ENCODE measurements at regions of chr14 and their contacts with region 1.

Region 1: DNA sequence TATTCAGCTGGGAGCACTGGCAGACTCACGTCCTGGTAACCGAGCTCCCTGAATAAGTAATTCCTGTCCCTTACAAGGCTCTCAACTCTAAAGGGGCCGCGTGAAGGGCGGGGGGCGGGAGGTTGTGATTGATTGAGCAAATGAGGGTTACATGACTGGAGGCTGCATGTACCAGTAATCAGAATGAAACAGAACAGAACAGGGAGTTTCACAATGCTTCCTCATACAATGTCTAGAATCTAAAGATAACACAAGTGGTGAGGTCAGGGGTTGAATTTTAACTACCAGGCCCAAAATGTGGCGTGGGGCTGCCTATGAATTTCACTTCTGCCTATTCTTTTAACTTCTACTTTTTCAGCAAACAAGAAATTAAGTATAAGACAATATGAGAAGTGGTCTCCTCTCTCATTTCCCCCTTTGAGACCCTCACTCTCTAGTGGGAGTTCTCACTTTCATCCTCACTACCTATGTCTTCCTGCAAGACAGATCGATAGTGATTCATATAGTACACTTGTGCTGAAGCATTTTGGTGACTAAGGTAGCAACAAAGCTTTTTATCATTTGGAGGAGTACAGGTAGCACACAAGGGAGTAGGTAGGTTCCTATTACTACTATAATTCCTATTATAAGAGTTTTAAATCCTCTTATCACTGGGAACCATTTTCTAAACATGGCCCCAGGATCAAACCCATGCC is 239.8 kb downstream of the KTN1 start:
- DNase-seq: no peak
- H3K4me3 ChIP-seq: no peak overlapping the region
- H3K27ac ChIP-seq: no peak overlapping the region
- H3K4me1 ChIP-seq: no peaks in the 10 kb centered on the region
- H3K27me3 ChIP-seq: peaks cover 4% of the 10 kb centered on the region
- CTCF ChIP-seq: no peak

Region 2: GRCh38 chr14:55752586-55753390 is 67.0 kb before region 1 on chr14:
- CTCF ChIA-PET with region 1: no interaction called
- dilution Hi-C with region 1: no loop called
- in situ Hi-C with region 1: no loop called
- intact Hi-C with region 1: no loop called
- DNase-seq: peak; percentile 11
- H3K4me3 ChIP-seq: no peak overlapping the region
- H3K27ac ChIP-seq: no peak overlapping the region
- H3K4me1 ChIP-seq: peaks cover 7% of the 10 kb centered on the region
- H3K27me3 ChIP-seq: no peaks in the 10 kb centered on the region
- CTCF ChIP-seq: no peak

Region 3: DNA sequence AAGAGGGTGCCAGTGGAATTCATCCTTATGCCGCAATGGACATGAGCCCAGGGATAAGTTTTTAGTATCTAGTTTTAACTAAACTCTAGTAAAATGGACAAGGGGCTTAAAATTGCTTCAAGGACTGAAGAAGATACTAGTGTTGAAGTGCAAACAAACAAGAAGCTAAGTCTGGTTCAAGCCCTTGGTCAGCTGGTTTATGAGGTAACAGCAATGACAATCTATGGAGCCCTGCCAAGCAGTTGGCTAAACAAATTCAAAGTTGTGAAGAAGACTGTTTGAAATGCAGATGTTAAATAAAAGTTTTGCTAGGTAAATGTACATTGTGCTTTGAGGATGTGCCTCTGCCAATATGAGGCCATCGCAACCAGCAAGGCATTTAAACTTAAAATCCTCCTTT is 30.3 kb before region 1 on chr14:
- CTCF ChIA-PET with region 1: no interaction called
- dilution Hi-C with region 1: loop called (anchors 5 kb)
- in situ Hi-C with region 1: no loop called
- intact Hi-C with region 1: no loop called
- DNase-seq: no peak
- H3K4me3 ChIP-seq: no peak overlapping the region
- H3K27ac ChIP-seq: no peak overlapping the region
- H3K4me1 ChIP-seq: peaks cover 3% of the 10 kb centered on the region
- H3K27me3 ChIP-seq: no peaks in the 10 kb centered on the region
- CTCF ChIP-seq: no peak

Region 4: GRCh38 chr14:56826214-56826613 is 1006.5 kb after region 1 on chr14:
- CTCF ChIA-PET with region 1: no interaction called
- dilution Hi-C with region 1: no loop called
- in situ Hi-C with region 1: no loop called
- intact Hi-C with region 1: no loop called
- DNase-seq: no peak
- H3K4me3 ChIP-seq: no peak overlapping the region
- H3K27ac ChIP-seq: no peak overlapping the region
- H3K4me1 ChIP-seq: no peaks in the 10 kb centered on the region
- H3K27me3 ChIP-seq: no peaks in the 10 kb centered on the region
- CTCF ChIP-seq: no peak